T-cell (primary cell): ENCODE measurements at regions of chr10 and their contacts with region 1.

Region 1: DNA sequence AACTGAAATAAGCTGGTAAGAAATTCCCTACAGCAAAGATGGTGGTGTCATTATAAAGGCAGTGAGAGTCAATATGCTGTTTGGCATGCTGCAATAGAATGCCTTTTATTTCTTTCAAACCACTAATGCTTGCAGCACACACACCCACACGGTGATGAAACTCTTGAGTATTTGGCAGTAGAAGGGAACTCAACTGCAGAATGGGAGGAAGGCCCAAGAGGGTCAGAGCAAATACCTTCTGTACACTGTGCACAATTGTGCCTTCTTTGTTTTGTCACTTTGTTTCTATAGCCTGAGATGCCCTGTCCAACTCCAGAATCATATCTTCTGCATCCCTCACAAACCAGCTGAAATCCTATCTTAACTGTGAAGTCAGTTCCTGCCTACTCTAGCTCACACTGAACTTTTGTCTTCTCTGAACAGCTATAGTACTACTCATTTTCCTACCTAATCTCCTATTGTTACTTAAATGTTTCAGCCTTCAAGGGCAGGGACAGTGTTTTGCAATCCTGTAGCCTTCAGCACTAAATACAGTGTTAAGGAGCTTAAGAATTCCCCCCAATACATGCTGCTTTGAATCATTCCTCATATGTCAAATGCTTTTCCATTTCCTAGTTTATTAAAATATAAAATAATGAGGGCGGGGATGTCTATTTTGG is 22.2 kb downstream of the MMS19 start:
- DNase-seq: no peak
- ATAC-seq: no peak
- H3K4me3 ChIP-seq: no peak overlapping the region
- H3K4me3 Mint-ChIP-seq: no peak overlapping the region
- H3K27ac ChIP-seq: no peak overlapping the region
- H3K27ac Mint-ChIP-seq: peak overlapping the region in 1 of 2 donors; percentile 13
- H3K4me1 ChIP-seq: no peaks in the 10 kb centered on the region
- H3K4me1 Mint-ChIP-seq: no peaks in the 10 kb centered on the region
- H3K27me3 ChIP-seq: no peaks in the 10 kb centered on the region
- H3K27me3 Mint-ChIP-seq: no peaks in the 10 kb centered on the region

Region 2: GRCh38 chr10:97334370-97335175 is 141.5 kb before region 1 on chr10 and contains the start of gene FRAT2:
- CTCF ChIA-PET with region 1: no interaction called
- POLR2A ChIA-PET with region 1: no interaction called
- DNase-seq: peak; percentile 71 to 92 (median 84)
- ATAC-seq: peak; percentile 88 to 91 (median 88)
- H3K4me3 ChIP-seq: peak within 1 kb of the TSS; percentile 70 to 82
- H3K4me3 Mint-ChIP-seq: peak within 1 kb of the TSS; percentile 93 to 95 (median 93)
- H3K27ac ChIP-seq: peak within 1 kb of the TSS; percentile 90
- H3K27ac Mint-ChIP-seq: peak within 1 kb of the TSS; percentile 87 to 93
- H3K4me1 ChIP-seq: peaks cover 11 to 38% of the 10 kb centered on the region in 2 experiments
- H3K4me1 Mint-ChIP-seq: peaks cover 37 to 41% (median 40%) of the 10 kb centered on the region in 3 donors
- H3K27me3 ChIP-seq: peaks cover 0 to 5% of the 10 kb centered on the region in 2 experiments
- H3K27me3 Mint-ChIP-seq: no peaks in the 10 kb centered on the region
- total RNA-seq, gene FRAT2: 23.3 to 29.0 (median 28.3) TPM

Region 3: DNA sequence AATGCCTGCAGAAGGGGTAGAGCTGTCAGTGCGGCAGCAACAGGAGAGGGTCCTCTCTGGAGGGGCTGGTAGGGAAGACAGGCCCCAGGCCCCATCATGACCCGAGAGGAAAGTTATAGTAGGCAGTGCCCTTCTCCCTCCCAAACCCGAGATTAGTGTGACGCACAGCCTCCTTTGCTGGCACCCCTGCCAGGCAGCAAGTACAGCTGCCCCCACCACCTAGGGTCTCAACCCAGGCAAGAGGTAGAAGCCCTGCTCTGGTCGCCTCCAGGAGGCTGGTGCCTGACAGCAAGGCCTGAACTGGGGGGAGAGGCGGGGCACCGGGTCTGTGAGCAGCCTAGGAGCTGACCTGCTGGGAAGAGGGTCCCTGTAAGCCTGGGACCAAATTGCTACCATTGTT is 776.4 kb after region 1 on chr10:
- CTCF ChIA-PET with region 1: no interaction called
- POLR2A ChIA-PET with region 1: interaction called in 1 of 2 experiments, 10 read pairs
- DNase-seq: peak in 1 of 35 experiments; percentile 11
- ATAC-seq: no peak
- H3K4me3 ChIP-seq: no peak overlapping the region
- H3K4me3 Mint-ChIP-seq: no peak overlapping the region
- H3K27ac ChIP-seq: no peak overlapping the region
- H3K27ac Mint-ChIP-seq: no peak overlapping the region
- H3K4me1 ChIP-seq: no peaks in the 10 kb centered on the region
- H3K4me1 Mint-ChIP-seq: no peaks in the 10 kb centered on the region
- H3K27me3 ChIP-seq: no peaks in the 10 kb centered on the region
- H3K27me3 Mint-ChIP-seq: no peaks in the 10 kb centered on the region

Region 4: GRCh38 chr10:98694014-98694413 is 1217.9 kb after region 1 on chr10:
- CTCF ChIA-PET with region 1: no interaction called
- POLR2A ChIA-PET with region 1: no interaction called
- DNase-seq: no peak
- ATAC-seq: no peak
- H3K4me3 ChIP-seq: no peak overlapping the region
- H3K4me3 Mint-ChIP-seq: no peak overlapping the region
- H3K27ac ChIP-seq: no peak overlapping the region
- H3K27ac Mint-ChIP-seq: no peak overlapping the region
- H3K4me1 ChIP-seq: no peaks in the 10 kb centered on the region
- H3K4me1 Mint-ChIP-seq: peaks cover 0 to 2% (median 0%) of the 10 kb centered on the region in 3 donors
- H3K27me3 ChIP-seq: peaks cover 2 to 6% of the 10 kb centered on the region in 2 experiments
- H3K27me3 Mint-ChIP-seq: peaks cover 8 to 19% of the 10 kb centered on the region in 2 donors